ENCODE measurements at regions of chr2 and their contacts with region 1.

Region 1: DNA sequence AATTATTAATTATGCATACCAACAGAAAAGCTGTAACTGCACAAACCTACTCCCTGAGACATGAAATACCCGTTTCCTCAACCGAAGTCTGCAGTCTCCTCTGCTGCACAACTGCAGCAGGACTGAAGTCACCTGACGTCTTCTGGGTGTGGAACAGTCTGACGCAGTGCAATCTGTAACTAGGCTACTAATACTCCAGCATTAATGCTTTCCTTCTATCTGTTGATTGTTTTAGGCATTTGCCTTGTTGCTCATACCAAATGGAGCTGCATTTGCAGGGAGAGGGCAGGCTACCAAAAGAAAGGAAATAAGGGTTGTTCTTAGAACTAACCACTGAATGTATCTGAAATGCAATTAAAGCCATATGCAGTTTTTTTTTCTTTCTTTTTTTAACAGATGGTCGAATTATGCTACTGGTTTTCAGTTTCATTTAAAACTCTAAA is 40.1 kb downstream of the RTN4 start:
- DNase-seq: peak; percentile 79
- H3K4me3 ChIP-seq: peak overlapping the region; percentile 38
- H3K27ac ChIP-seq: peak overlapping the region; percentile 20
- H3K4me1 ChIP-seq: peaks cover 94% of the 10 kb centered on the region
- H3K27me3 ChIP-seq: no peaks in the 10 kb centered on the region
- CTCF ChIP-seq: no peak

Region 2: GRCh38 chr2:54409752-54410151 is 600.4 kb before region 1 on chr2:
- CTCF ChIA-PET with region 1: no interaction called
- POLR2A ChIA-PET with region 1: interaction called, 20 read pairs
- intact Hi-C with region 1: no loop called
- DNase-seq: peak; percentile 71
- H3K4me3 ChIP-seq: no peak overlapping the region
- H3K27ac ChIP-seq: no peak overlapping the region
- H3K4me1 ChIP-seq: peaks cover 33% of the 10 kb centered on the region
- H3K27me3 ChIP-seq: no peaks in the 10 kb centered on the region
- CTCF ChIP-seq: no peak

Region 3: DNA sequence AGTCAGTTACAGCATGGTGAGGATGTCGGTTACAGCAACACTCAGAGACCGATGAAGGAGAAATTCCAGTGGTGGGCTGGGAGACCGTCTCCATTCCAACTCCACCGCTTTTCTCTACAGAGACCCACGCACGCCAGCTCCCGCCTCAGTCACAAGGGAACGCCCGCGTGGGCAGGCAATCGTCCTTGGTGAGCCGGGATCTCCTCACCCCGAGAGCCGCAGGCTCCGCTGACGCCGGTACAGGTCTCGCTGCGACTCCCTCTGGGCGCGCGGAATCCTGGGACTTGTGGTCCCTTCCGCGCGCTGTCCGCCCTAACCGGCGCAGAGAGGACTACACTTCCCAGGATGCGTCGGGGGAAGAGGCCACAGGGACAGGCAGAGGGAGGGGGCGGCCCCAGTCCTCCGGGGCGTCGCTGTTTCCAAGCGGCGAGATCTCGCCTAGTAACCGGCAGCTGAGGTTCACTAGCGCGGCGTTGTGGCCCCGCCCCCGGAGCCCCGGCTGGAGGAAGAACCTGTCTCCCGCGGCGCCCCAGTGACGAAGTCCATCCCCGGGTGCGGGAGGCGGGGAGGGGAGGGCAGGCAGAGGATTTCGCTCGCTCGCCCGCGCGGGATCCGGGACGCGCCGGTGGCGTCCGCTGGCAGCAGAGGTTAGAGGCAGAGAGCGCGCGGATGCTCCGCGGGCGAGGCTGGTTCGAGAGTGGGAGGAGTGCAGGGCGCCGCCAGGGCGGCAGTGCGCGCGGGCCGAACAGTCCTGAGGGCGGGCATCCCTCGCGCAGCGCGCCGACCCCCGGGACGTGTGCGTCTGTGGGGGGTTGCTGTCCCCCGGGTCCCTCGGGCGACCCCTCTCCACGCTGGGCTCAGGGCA is 286.8 kb before region 1 on chr2 and contains the start of gene EML6:
- CTCF ChIA-PET with region 1: no interaction called
- POLR2A ChIA-PET with region 1: no interaction called
- intact Hi-C with region 1: loop called (anchors 10 kb)
- DNase-seq: peak; percentile 100
- H3K4me3 ChIP-seq: peak within 1 kb of the TSS; percentile 65
- H3K27ac ChIP-seq: peak within 1 kb of the TSS; percentile 54
- H3K4me1 ChIP-seq: peaks cover 6% of the 10 kb centered on the region
- H3K27me3 ChIP-seq: peaks cover 24% of the 10 kb centered on the region
- CTCF ChIP-seq: peak; percentile 24
- total RNA-seq, gene EML6: 1.7 and 1.9 TPM in 2 replicates

Region 4: GRCh38 chr2:55213822-55214221 is 203.7 kb after region 1 on chr2:
- CTCF ChIA-PET with region 1: no interaction called
- POLR2A ChIA-PET with region 1: interaction called, 10 read pairs
- intact Hi-C with region 1: no loop called
- DNase-seq: no peak
- H3K4me3 ChIP-seq: no peak overlapping the region
- H3K27ac ChIP-seq: no peak overlapping the region
- H3K4me1 ChIP-seq: no peaks in the 10 kb centered on the region
- H3K27me3 ChIP-seq: no peaks in the 10 kb centered on the region
- CTCF ChIP-seq: no peak

Region 5: GRCh38 chr2:55252832-55253231 is 242.7 kb after region 1 on chr2:
- CTCF ChIA-PET with region 1: no interaction called
- POLR2A ChIA-PET with region 1: no interaction called
- intact Hi-C with region 1: no loop called
- DNase-seq: no peak
- H3K4me3 ChIP-seq: no peak overlapping the region
- H3K27ac ChIP-seq: no peak overlapping the region
- H3K4me1 ChIP-seq: no peaks in the 10 kb centered on the region
- H3K27me3 ChIP-seq: no peaks in the 10 kb centered on the region
- CTCF ChIP-seq: no peak

Measured in A673 (cell line).